HEK293 (cell line): ENCODE measurements at regions of chr1 and their contacts with region 1.

Region 1: GRCh38 chr1:27349784-27350662 is 8.2 kb downstream of the SYTL1 start:
- H3K4me3 ChIP-seq: no peak overlapping the region; the same call in 1 of the 2 replicates
- H3K27ac ChIP-seq: no peak overlapping the region
- H3K4me1 ChIP-seq: peaks cover 4% of the 10 kb centered on the region
- CTCF ChIP-seq: no peak

Region 2: DNA sequence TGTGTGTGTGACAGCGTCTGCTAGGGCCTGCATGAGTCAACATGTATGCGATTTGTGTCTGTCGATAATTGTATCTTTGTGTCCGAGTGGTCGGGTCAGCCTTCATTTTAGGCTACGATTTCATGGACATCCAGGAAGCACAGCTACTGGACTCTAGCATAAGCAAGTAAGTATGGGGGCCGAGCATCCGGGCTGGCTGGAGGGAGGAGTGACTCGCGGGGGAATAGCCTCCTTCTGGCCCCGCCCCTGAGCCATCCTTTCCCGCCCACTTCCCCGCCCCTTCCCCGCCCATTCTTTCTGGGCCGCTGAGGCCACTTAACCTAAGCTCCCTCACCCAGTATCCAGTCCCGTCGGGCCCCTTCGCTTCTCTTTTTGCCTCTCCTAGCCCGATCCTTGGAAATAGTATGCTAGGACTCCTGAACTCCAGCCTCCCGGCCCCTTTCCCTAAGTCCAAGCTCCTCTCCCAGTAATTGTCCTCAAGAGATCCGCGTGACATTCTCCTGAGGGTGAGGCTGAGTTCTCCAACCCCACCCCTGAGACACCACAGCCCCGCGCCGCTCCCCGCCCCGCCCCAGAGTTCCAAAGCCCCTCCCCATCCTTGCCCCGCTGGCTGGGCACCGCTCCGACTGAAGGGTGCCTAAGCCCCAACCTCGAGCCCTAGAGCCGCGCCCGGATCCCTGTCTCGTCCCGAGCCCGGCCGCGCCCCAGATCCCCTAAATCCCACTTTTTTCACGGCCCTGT is 15.5 kb after region 1 on chr1:
- CTCF ChIA-PET with region 1: interaction called, 84 read pairs
- POLR2A ChIA-PET with region 1: interaction called, 23 read pairs
- H3K4me3 ChIP-seq: peak overlapping the region; percentile 60
- H3K27ac ChIP-seq: peak overlapping the region; percentile 78
- H3K4me1 ChIP-seq: peaks cover 2% of the 10 kb centered on the region; the same call in 1 of the 2 replicates
- CTCF ChIP-seq: no peak